ENCODE measurements at regions of chr15 and their contacts with region 1.

Region 1: DNA sequence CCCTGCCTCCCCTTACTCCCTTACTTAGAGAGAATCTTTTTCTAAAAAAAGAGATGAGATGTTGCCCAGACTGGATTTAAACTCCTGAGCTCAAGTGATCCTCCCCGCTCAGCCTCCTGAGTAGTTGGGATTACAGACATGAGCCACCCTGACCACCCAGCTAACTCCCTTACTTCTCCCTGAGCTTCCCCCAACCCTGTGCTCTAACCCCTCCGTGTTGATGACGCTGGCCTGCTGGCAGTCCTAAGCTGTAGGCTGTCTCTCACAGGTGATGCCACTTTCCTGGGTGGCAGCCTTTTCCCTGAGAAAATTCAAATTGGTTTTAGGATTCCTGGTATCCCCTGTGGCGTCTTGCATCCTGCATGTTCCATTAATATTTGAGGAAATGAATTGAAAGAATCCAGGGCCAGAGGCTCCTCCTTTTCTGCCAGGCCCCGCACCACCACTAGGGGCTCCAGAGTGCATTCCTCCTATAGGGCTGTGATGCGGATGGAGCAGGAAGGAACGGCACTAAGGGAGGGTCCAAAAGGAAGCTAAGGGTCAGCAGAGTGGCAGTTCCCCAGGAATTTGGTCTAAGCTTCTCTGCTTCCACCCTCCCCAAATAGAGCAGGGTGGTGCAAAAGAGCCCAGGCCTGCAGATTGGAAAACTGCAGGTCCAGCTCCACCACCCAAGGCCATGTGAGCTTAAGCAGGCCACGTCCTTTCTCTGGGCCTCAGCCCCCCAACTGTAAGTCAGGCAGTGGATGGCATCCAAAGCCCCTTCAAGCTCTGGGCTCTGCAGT is 101.1 kb downstream of the DAPK2 start:
- DNase-seq: peak; percentile 71 to 76 (median 76)
- ATAC-seq: peak; percentile 86 to 95 (median 90)
- H3K4me3 ChIP-seq: no peak overlapping the region
- H3K27ac ChIP-seq: no peak overlapping the region
- H3K4me1 ChIP-seq: peaks cover 0 to 5% (median 0%) of the 10 kb centered on the region in 4 donors
- H3K27me3 ChIP-seq: no peaks in the 10 kb centered on the region
- CTCF ChIP-seq: peak; percentile 83 to 94 (median 92)
- POLR2A ChIP-seq: no peak

Region 2: DNA sequence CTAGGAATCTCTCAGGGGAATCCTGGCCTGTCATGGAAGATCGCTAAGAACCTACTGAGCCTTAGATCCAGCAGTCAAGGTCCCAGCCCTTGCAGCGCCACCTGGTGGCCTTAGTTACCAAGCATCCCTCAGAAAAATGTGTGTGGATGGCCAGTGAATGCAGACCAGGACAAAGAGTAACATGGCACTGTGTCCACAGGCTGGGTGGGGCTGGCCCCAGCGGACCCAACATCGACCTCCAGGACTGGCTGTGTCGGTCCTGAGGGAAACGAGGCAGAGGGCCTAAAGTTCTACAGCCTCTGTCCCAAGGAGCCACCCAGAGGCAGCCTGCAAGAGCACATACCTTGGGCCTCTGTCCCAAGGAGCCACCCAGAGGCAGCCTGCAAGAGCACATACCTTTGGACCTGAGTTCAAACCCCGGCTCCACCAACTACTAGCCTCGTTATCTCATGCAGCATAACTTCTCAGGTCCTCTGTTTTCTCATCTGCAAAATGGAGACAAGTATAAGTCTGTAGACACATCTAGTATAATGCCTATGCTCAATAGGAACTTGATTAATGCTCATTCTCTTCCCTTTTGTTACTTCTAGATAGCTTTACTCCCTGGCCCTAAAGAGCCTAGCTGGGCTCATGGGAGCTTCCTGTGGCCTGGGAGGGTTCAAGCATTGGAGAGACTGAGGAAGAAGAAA is 54.0 kb before region 1 on chr15:
- intact Hi-C with region 1: loop called in 1 of 2 experiments (anchors 10 kb)
- DNase-seq: peak; percentile 82 to 84 (median 83)
- ATAC-seq: peak; percentile 59 to 75 (median 71)
- H3K4me3 ChIP-seq: no peak overlapping the region
- H3K27ac ChIP-seq: no peak overlapping the region
- H3K4me1 ChIP-seq: peaks cover 0 to 32% (median 10%) of the 10 kb centered on the region in 4 donors
- H3K27me3 ChIP-seq: no peaks in the 10 kb centered on the region
- CTCF ChIP-seq: peak; percentile 88 to 95 (median 90)
- POLR2A ChIP-seq: no peak

Region 3: DNA sequence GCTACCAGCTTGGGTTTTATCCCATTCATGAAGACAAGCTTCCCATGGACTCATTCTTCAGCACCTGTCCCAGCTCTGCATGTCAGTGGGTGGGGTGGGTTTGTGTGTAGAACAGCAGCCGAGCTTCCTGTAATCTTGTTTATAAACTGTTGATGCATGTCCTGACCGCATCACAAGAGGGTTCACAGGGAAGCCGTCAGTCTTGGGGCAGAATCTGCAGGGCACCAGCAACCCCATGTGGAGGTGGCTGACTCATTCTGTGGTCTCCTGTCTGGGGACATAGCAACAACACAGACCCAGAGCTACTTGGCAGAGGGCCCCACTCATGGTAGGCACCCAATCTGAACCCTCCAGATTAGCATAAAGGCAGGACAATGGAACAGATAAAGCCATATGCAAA is 65.5 kb after region 1 on chr15:
- intact Hi-C with region 1: no loop called
- DNase-seq: no peak
- ATAC-seq: peak; percentile 23 to 46 (median 34)
- H3K4me3 ChIP-seq: no peak overlapping the region
- H3K27ac ChIP-seq: no peak overlapping the region
- H3K4me1 ChIP-seq: peaks cover 0 to 20% (median 4%) of the 10 kb centered on the region in 4 donors
- H3K27me3 ChIP-seq: no peaks in the 10 kb centered on the region
- CTCF ChIP-seq: no peak
- POLR2A ChIP-seq: no peak

Region 4: GRCh38 chr15:64044300-64045108 is 99.3 kb after region 1 on chr15:
- intact Hi-C with region 1: loop called in 1 of 2 experiments (anchors 5 kb)
- DNase-seq: no peak
- ATAC-seq: no peak
- H3K4me3 ChIP-seq: no peak overlapping the region
- H3K27ac ChIP-seq: no peak overlapping the region
- H3K4me1 ChIP-seq: peaks cover 0 to 7% (median 0%) of the 10 kb centered on the region in 4 donors
- H3K27me3 ChIP-seq: no peaks in the 10 kb centered on the region
- CTCF ChIP-seq: no peak
- POLR2A ChIP-seq: no peak

Measured in right lobe of liver (tissue), 6 donors.